Thyroid gland (tissue), 4 donors: ENCODE measurements at regions of chr13 and their contacts with region 1.

Region 1: GRCh38 chr13:102580552-102581169 is 16.1 kb upstream of the TPP2 start:
- DNase-seq: no peak
- H3K4me3 ChIP-seq: no peak overlapping the region
- H3K27ac ChIP-seq: no peak overlapping the region
- H3K4me1 ChIP-seq: no peaks in the 10 kb centered on the region
- H3K27me3 ChIP-seq: no peaks in the 10 kb centered on the region
- CTCF ChIP-seq: peak; percentile 48 to 78 (median 69)
- POLR2A ChIP-seq: no peak

Region 2: GRCh38 chr13:102724923-102725322 is 144.3 kb after region 1 on chr13:
- intact Hi-C with region 1: loop called (anchors 10 kb)
- DNase-seq: peak in 1 of 2 donors; percentile 8
- H3K4me3 ChIP-seq: no peak overlapping the region
- H3K27ac ChIP-seq: no peak overlapping the region
- H3K4me1 ChIP-seq: peaks cover 2 to 4% of the 10 kb centered on the region in 2 donors
- H3K27me3 ChIP-seq: no peaks in the 10 kb centered on the region
- CTCF ChIP-seq: peak in 4 of 6 experiments; percentile 47 to 65 (median 56)
- POLR2A ChIP-seq: no peak

Region 3: GRCh38 chr13:102845630-102846260 is 265.1 kb after region 1 on chr13 and contains the start of gene ERCC5:
- intact Hi-C with region 1: loop called (anchors 5 kb)
- DNase-seq: peak; percentile 93 to 94
- H3K4me3 ChIP-seq: peak within 1 kb of the TSS; percentile 43 to 85 (median 49)
- H3K27ac ChIP-seq: peak within 1 kb of the TSS; percentile 74 to 98 (median 95)
- H3K4me1 ChIP-seq: peaks cover 7 to 16% of the 10 kb centered on the region in 2 donors
- H3K27me3 ChIP-seq: no peaks in the 10 kb centered on the region
- CTCF ChIP-seq: peak in 1 of 6 experiments; percentile 26
- POLR2A ChIP-seq: peak; percentile 13 to 77
- total RNA-seq, gene ERCC5: 57.2 to 119 (median 102) TPM

Region 4: DNA sequence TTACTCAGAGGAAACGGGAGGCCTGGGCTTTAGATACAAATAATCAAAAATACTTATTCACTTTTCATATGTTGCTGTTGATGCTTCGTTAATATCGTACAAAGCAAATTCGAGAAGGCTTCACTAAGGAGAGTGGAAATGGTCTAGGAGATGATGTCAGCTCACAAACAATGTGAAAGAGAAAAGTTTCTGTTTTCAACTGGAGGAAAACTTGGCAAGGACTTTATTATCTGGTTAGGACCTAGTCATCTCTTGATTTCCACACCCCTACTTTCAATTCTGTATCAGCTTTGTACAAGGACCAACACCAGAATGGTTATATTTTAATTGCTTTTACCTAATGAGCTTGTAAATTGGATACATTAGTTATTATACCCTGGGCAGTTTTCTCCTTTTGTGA is 397.5 kb after region 1 on chr13:
- intact Hi-C with region 1: no loop called
- DNase-seq: no peak
- H3K4me3 ChIP-seq: no peak overlapping the region
- H3K27ac ChIP-seq: no peak overlapping the region
- H3K4me1 ChIP-seq: no peaks in the 10 kb centered on the region
- H3K27me3 ChIP-seq: no peaks in the 10 kb centered on the region
- CTCF ChIP-seq: no peak
- POLR2A ChIP-seq: no peak